ENCODE measurements at regions of chr12 and their contacts with region 1.

Region 1: GRCh38 chr12:10212201-10213131 is at the start of gene GABARAPL1:
- DNase-seq: peak; percentile 88 to 92
- ATAC-seq: peak; percentile 68 to 85 (median 72)
- H3K4me3 ChIP-seq: peak within 1 kb of the TSS; percentile 97
- H3K4me3 Mint-ChIP-seq: peak within 1 kb of the TSS; percentile 95
- H3K27ac ChIP-seq: peak within 1 kb of the TSS; percentile 99
- H3K27ac Mint-ChIP-seq: peak within 1 kb of the TSS; percentile 91 to 97
- H3K4me1 ChIP-seq: peaks cover 38% of the 10 kb centered on the region
- H3K4me1 Mint-ChIP-seq: peaks cover 32 to 34% of the 10 kb centered on the region in 2 donors
- H3K27me3 ChIP-seq: no peaks in the 10 kb centered on the region
- H3K27me3 Mint-ChIP-seq: no peaks in the 10 kb centered on the region
- CTCF ChIP-seq: no peak
- total RNA-seq, gene GABARAPL1: 157 to 233 (median 160) TPM

Region 2: GRCh38 chr12:10196210-10196609 is 16.3 kb before region 1 on chr12:
- intact Hi-C with region 1: loop called (anchors 2 kb)
- DNase-seq: peak; percentile 22
- ATAC-seq: peak; percentile 72 to 84 (median 82)
- H3K4me3 ChIP-seq: no peak overlapping the region
- H3K4me3 Mint-ChIP-seq: peak overlapping the region; percentile 64
- H3K27ac ChIP-seq: no peak overlapping the region
- H3K27ac Mint-ChIP-seq: peak overlapping the region; percentile 67 to 83
- H3K4me1 ChIP-seq: peaks cover 31% of the 10 kb centered on the region
- H3K4me1 Mint-ChIP-seq: peaks cover 28 to 37% of the 10 kb centered on the region in 2 donors
- H3K27me3 ChIP-seq: no peaks in the 10 kb centered on the region
- H3K27me3 Mint-ChIP-seq: peaks cover under 1 to 14% of the 10 kb centered on the region in 2 donors
- CTCF ChIP-seq: no peak

Measured in natural killer cell (primary cell).